ENCODE measurements at regions of chr2 and their contacts with region 1.

Region 1: GRCh38 chr2:64488050-64488974 is 34.4 kb downstream of the LGALSL start:
- DNase-seq: peak in 1 of 2 experiments; percentile 74
- H3K4me3 ChIP-seq: no peak overlapping the region
- H3K27ac ChIP-seq: no peak overlapping the region
- H3K4me1 ChIP-seq: peaks cover 4% of the 10 kb centered on the region; the same call in 1 of the 2 replicates
- H3K27me3 ChIP-seq: no peaks in the 10 kb centered on the region
- CTCF ChIP-seq: peak; percentile 98

Region 2: DNA sequence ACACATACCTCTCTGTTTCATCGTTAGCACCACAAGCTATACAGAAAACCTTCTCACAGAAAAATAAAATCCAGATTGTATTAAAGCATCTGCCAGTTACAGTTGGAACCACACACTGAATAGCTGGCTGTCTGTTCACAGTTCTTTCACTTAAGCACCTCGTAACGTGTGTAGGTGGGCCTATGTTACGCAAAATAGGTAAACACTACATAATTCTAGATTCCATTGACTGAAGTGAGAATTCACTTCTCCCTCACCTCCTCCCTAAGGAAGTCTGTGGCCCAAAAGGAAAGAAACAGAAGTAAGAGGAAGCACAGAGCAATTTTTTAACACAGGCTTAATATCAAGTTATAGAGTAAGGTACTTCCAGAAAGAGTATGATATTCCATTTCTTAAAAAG is 368.9 kb before region 1 on chr2:
- CTCF ChIA-PET with region 1: no interaction called
- POLR2A ChIA-PET with region 1: interaction called, 10 read pairs
- intact Hi-C with region 1: no loop called
- DNase-seq: no peak
- H3K4me3 ChIP-seq: no peak overlapping the region
- H3K27ac ChIP-seq: no peak overlapping the region
- H3K4me1 ChIP-seq: peaks cover 14% of the 10 kb centered on the region
- H3K27me3 ChIP-seq: no peaks in the 10 kb centered on the region
- CTCF ChIP-seq: no peak

Region 3: GRCh38 chr2:64144057-64145013 is 344.0 kb before region 1 on chr2 and contains the start of gene PELI1:
- CTCF ChIA-PET with region 1: no interaction called
- POLR2A ChIA-PET with region 1: no interaction called
- intact Hi-C with region 1: loop called (anchors 10 kb)
- DNase-seq: peak; percentile 98 to 99
- H3K4me3 ChIP-seq: peak within 1 kb of the TSS; percentile 80
- H3K27ac ChIP-seq: no peak within 1 kb of the TSS
- H3K4me1 ChIP-seq: peaks cover 36% of the 10 kb centered on the region
- H3K27me3 ChIP-seq: no peaks in the 10 kb centered on the region
- CTCF ChIP-seq: peak; percentile 40; the same call in 1 of the 2 replicates
- total RNA-seq, gene PELI1: 32.6 and 33.1 TPM in 2 replicates

Region 4: DNA sequence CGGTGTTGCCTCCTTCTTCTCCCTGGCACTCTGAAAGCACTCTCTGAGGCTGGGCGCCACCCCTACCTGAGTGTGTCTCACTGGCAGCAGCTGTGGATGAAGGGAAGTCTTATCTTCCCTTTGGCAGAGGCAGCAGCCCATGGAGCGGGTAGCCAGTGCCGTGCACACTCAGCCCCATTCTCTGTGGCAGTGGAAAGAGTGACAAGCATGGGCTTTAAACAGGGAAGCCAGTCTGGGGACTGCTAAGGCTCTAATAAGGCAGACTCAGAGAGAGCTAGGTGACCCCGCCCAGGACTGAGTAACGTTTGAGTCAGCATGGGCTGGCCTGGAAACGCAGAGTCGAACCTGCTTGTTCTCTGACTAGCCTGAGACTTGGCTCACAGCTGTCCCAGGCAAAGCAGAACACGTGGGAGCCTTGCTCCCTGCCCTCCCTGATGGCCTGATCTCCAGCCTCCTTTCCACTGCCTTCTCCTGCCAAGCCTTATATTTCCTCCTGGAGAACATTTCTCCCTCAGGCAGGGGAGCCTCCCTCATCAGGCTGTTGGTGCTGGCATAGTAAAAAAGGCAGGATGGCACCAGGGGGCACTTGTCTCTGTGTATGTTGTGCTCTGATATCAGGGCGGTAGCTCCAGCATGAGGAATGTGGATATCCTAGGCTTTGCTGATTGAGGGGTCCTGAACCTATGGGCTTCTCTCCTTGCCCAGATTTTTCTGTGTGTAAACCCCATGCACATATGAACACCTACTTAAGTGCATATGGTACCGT is 128.2 kb before region 1 on chr2:
- CTCF ChIA-PET with region 1: interaction called, 4 read pairs
- POLR2A ChIA-PET with region 1: no interaction called
- intact Hi-C with region 1: loop called (anchors 10 kb)
- DNase-seq: peak; percentile 93 to 98
- H3K4me3 ChIP-seq: peak overlapping the region; percentile 29; the same call in 1 of the 2 replicates
- H3K27ac ChIP-seq: peak overlapping the region; percentile 94
- H3K4me1 ChIP-seq: peaks cover 67% of the 10 kb centered on the region
- H3K27me3 ChIP-seq: no peaks in the 10 kb centered on the region
- CTCF ChIP-seq: peak; percentile 39; the same call in 1 of the 2 replicates

Region 5: GRCh38 chr2:64400733-64401500 is 87.4 kb before region 1 on chr2:
- CTCF ChIA-PET with region 1: interaction called, 11 read pairs
- POLR2A ChIA-PET with region 1: no interaction called
- intact Hi-C with region 1: no loop called
- DNase-seq: peak; percentile 65 to 86
- H3K4me3 ChIP-seq: peak overlapping the region; percentile 5; the same call in 1 of the 2 replicates
- H3K27ac ChIP-seq: peak overlapping the region; percentile 93
- H3K4me1 ChIP-seq: peaks cover 56% of the 10 kb centered on the region
- H3K27me3 ChIP-seq: no peaks in the 10 kb centered on the region
- CTCF ChIP-seq: no peak

Region 6: GRCh38 chr2:64562148-64562784 is 74.0 kb after region 1 on chr2:
- CTCF ChIA-PET with region 1: no interaction called
- POLR2A ChIA-PET with region 1: no interaction called
- intact Hi-C with region 1: loop called (anchors 1 kb)
- DNase-seq: no peak
- H3K4me3 ChIP-seq: no peak overlapping the region
- H3K27ac ChIP-seq: no peak overlapping the region
- H3K4me1 ChIP-seq: no peaks in the 10 kb centered on the region
- H3K27me3 ChIP-seq: no peaks in the 10 kb centered on the region
- CTCF ChIP-seq: peak; percentile 69

Region 7: GRCh38 chr2:64888591-64889309 is 400.4 kb after region 1 on chr2:
- CTCF ChIA-PET with region 1: no interaction called
- POLR2A ChIA-PET with region 1: no interaction called
- intact Hi-C with region 1: loop called (anchors 5 kb)
- DNase-seq: peak; percentile 80 to 92
- H3K4me3 ChIP-seq: no peak overlapping the region
- H3K27ac ChIP-seq: no peak overlapping the region
- H3K4me1 ChIP-seq: peaks cover 8% of the 10 kb centered on the region
- H3K27me3 ChIP-seq: no peaks in the 10 kb centered on the region
- CTCF ChIP-seq: peak; percentile 79

Region 8: DNA sequence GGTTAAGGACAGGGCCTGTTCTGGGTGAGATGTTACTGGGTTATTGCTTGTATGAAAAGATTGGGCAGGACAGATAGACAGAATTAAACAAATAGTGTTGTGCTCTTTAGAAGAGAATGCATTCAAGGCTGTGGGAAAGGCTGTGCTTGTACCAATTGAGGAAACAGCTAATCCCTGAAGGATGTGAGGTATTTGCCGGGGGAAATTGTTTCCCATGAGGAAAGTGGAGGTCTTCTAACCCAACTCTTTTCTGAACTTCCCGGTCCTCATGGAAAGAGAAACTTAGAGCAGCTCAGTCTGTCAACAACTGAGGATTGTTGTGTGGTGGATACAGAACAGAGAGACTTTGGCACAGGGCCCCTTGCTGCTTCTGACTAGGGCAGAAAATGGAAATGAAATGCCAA is 510.3 kb after region 1 on chr2:
- CTCF ChIA-PET with region 1: no interaction called
- POLR2A ChIA-PET with region 1: no interaction called
- intact Hi-C with region 1: no loop called
- DNase-seq: no peak
- H3K4me3 ChIP-seq: no peak overlapping the region
- H3K27ac ChIP-seq: no peak overlapping the region
- H3K4me1 ChIP-seq: no peaks in the 10 kb centered on the region
- H3K27me3 ChIP-seq: no peaks in the 10 kb centered on the region
- CTCF ChIP-seq: no peak